Heart right ventricle (tissue), 16 donors: ENCODE measurements at regions of chr6 and their contacts with region 1.

Region 1: GRCh38 chr6:125314019-125314581 is 12.3 kb upstream of the HDDC2 start:
- DNase-seq: peak; percentile 51 to 74
- ATAC-seq: peak; percentile 80 to 94 (median 93)
- H3K4me3 ChIP-seq: no peak overlapping the region
- H3K27ac ChIP-seq: peak overlapping the region in 2 of 10 donors; percentile 10 to 41
- H3K4me1 ChIP-seq: peaks cover 0 to 16% (median 0%) of the 10 kb centered on the region in 9 donors
- H3K27me3 ChIP-seq: peaks cover 0 to 23% (median 0%) of the 10 kb centered on the region in 7 donors
- CTCF ChIP-seq: peak; percentile 76 to 94 (median 87)

Region 2: DNA sequence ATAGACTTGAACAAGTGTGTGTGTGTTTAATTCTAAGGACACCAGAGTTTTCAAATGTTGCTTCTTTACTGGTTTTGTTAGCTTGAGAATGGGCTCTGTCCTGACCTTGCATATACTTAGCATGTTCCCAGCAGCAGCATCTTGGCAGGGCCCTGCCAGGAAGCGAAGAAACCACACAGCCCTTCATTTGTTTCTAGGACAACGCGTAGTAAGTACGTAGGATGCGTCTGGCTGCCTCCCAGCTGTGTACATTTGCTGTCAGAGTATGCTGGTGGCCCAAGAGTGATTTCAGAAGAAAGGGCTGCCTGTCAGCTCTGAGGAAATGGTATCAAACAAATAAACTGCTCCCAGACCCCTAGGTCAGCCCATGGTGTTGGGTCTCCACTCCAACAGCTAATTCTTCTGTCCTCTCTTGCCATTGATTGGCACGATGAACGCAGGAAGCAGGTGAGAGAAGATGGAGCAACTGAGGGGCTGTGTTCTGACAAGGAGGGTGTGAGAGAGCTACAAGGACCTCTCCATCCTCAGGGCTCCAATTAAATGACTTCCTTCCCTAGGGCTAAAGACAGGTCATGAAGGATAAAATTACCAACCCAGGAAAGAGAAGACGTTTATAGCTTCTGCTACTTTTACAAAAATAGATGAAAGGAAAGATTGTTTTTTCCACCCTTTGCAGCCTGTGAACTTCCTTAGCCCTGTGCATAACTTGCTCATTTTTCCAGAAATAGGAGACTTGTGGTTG is 43.6 kb after region 1 on chr6:
- intact Hi-C with region 1: no loop called
- DNase-seq: peak; percentile 18 to 48
- ATAC-seq: peak in 7 of 8 donors; percentile 34 to 83 (median 68)
- H3K4me3 ChIP-seq: no peak overlapping the region
- H3K27ac ChIP-seq: peak overlapping the region in 6 of 10 donors; percentile 15 to 58 (median 39)
- H3K4me1 ChIP-seq: peaks cover 0 to 32% (median 7%) of the 10 kb centered on the region in 9 donors
- H3K27me3 ChIP-seq: peaks cover 0 to 17% (median 0%) of the 10 kb centered on the region in 7 donors
- CTCF ChIP-seq: no peak

Region 3: DNA sequence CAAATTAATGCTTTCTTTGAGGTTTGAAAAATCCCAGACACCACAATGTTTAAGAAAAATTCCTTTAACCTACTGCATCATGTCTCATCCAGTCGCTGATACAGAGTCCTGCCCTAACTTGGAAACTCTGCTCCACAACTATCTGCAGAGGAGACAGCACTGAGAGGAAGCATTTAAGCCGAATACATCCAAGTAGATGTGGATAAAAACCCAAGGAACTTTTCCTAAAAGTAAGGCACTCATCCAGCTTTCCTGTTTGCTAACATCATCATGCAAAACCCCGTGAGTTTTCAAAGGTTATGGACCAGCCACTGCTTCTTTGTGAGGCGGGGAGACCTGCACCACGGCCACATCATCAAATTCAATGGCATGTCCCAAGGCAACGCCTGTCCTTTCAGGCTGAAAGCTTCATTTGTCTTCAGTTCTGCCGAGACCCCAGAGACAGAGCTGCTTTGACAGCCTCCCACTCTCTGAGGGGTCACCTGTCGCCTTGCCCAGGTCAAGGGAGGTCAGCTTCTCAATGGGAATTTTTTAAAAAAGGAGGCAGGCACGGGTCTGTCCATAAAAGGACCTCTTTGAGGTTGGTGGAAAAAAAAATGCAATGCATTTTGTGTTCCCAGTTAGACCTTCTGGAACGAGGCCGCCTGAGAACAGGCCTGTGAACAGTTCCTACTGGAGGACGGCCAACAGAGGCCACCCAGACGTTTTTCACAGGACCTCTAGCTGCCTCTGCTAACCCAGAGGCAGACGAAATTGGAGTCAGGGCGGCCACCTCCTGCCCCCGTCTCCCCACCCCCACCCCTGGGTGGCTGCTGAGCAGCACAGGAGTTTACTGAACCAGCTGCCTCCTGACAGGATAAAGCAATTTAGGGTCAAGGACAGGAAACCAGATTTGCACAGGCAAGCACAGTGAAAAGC is 130.2 kb after region 1 on chr6:
- intact Hi-C with region 1: loop called in 1 of 10 experiments (anchors 10 kb)
- DNase-seq: peak; percentile 67 to 82
- ATAC-seq: peak; percentile 81 to 95 (median 92)
- H3K4me3 ChIP-seq: peak overlapping the region in 1 of 10 donors; percentile 21
- H3K27ac ChIP-seq: peak overlapping the region in 9 of 10 donors; percentile 9 to 78 (median 65)
- H3K4me1 ChIP-seq: peaks cover 0 to 19% (median 4%) of the 10 kb centered on the region in 9 donors
- H3K27me3 ChIP-seq: no peaks in the 10 kb centered on the region
- CTCF ChIP-seq: no peak

Region 4: DNA sequence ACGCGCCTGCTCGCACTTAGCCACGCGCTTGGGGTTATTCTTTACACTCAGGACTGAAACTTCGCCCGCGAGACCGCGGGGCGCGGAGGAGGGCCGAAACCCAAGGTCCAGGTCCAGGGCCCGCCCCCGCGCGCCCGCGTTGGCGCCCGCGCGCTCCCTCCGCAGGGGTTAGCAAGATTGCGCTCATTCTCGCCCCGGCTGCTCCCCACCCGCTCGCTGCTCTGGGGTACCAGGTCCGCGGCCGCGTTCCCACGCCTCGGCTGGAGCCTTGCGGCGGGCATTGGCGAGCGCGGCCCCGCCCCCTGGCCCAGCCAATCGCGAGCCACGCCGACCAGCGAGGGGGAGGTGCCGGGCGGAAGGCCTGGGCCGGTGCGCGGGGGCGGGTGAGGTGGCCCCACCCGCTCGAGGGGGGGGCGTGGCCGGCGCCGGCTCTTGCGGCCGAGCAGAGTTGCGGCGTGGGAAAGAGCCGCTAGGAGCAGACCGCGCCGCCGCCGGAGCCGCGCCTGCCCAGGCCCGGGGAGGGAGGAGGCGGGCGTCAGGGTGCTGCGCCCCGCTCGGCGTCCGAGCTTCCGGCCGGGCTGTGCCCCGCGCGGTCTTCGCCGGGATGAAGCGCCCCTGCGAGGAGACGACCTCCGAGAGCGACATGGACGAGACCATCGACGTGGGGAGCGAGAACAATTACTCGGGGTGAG is 435.2 kb after region 1 on chr6 and contains the start of gene HEY2:
- intact Hi-C with region 1: loop called in 4 of 10 experiments (anchors 1 to 5 kb)
- DNase-seq: peak; percentile 93 to 96
- ATAC-seq: peak; percentile 86 to 97 (median 93)
- H3K4me3 ChIP-seq: peak within 1 kb of the TSS; percentile 60 to 87 (median 76)
- H3K27ac ChIP-seq: peak within 1 kb of the TSS; percentile 88 to 98 (median 96)
- H3K4me1 ChIP-seq: peaks cover 0 to 56% (median 23%) of the 10 kb centered on the region in 9 donors
- H3K27me3 ChIP-seq: peaks cover 0 to 90% (median 0%) of the 10 kb centered on the region in 7 donors
- CTCF ChIP-seq: peak in 4 of 9 donors; percentile 7 to 30 (median 28)
- total RNA-seq, gene HEY2: 12.4 to 75.1 (median 36.2) TPM

Region 5: DNA sequence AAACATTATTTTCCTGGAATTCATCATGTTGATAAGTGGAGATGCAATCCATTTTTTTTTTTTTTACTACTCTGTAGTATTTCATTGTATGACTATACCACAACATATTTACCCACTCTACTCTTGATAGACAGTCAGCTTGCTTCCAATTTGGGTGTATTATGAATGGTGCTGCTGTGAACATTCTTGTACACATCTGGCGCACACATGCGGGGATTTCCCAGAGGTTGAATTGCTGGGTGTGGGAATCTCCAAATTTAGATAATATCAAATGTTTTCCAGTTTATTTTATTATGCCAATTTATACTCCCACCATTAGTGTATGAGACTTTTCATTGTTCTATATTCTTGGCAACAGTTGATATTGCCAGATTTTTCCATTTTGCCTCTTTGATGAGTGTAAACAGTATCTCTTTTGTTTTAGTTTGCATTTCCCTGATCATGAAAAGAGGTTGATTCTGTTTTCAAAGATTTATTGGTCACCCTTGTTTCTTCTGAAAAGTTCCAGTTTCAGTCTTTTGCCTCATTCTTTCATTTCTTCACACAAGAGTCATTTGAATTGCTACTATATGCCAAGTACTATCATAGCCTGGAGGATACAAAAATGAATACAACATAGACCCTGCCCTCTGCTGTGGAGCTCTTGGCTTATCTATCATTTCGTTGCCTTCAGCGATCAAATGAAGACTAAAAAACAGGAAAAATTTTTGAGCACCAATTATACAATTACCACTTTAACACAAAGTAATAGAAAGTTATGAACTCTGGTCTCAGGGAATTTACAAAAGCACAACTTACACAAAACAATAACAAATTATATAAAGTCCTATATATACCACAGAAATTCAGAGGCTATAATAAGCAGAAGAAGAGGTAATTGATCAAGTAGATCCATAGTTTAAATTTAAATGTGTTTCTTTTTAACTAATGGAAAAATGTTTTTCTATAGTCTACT is 459.6 kb after region 1 on chr6:
- intact Hi-C with region 1: loop called (anchors 1 to 5 kb)
- DNase-seq: no peak
- ATAC-seq: peak in 2 of 8 donors; percentile 46 to 47
- H3K4me3 ChIP-seq: no peak overlapping the region
- H3K27ac ChIP-seq: no peak overlapping the region
- H3K4me1 ChIP-seq: no peaks in the 10 kb centered on the region
- H3K27me3 ChIP-seq: no peaks in the 10 kb centered on the region
- CTCF ChIP-seq: no peak

Region 6: GRCh38 chr6:125966569-125966968 is 652.5 kb after region 1 on chr6:
- intact Hi-C with region 1: loop called in 7 of 10 experiments (anchors 5 to 10 kb)
- DNase-seq: no peak
- ATAC-seq: no peak
- H3K4me3 ChIP-seq: no peak overlapping the region
- H3K27ac ChIP-seq: no peak overlapping the region
- H3K4me1 ChIP-seq: peaks cover 0 to 4% (median 0%) of the 10 kb centered on the region in 9 donors
- H3K27me3 ChIP-seq: no peaks in the 10 kb centered on the region
- CTCF ChIP-seq: no peak